Heart left ventricle (tissue), 16 donors: ENCODE measurements at regions of chr11 and their contacts with region 1.

Region 1: DNA sequence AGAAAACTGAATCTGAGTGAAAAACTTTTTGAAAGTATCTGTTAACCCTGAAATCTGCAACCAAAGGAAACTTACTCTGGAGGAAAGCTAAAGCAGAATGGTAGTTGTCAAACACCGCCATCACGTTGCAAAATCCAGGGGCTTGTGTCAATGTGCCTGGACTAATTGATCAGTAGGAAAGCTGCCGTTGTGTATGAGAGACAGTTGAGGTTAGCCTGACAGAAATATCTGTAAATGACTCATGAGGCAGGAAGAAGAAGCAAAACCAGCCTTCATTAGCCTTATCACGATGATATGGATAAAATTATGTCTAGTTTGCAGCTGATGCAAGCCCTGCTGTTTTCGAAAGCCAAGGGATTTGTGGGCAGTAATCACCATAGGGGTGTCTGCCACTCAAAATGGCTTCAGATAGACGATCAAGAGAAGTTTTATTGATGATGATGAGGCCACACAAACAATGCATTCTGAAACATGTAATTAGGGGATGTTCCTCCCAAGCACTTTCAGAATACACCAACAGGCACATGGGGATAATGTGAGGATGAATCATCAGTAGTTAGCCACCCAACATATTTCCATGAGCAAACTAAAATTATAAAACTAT is 8.9 kb downstream of the SCGB1A1 start:
- DNase-seq: no peak
- ATAC-seq: no peak
- H3K4me3 ChIP-seq: no peak overlapping the region
- H3K27ac ChIP-seq: peak overlapping the region in 2 of 12 donors; percentile 78 to 84
- H3K4me1 ChIP-seq: peaks cover 0 to 62% (median 3%) of the 10 kb centered on the region in 12 donors
- H3K27me3 ChIP-seq: no peaks in the 10 kb centered on the region
- CTCF ChIP-seq: no peak
- POLR2A ChIP-seq: no peak

Region 2: DNA sequence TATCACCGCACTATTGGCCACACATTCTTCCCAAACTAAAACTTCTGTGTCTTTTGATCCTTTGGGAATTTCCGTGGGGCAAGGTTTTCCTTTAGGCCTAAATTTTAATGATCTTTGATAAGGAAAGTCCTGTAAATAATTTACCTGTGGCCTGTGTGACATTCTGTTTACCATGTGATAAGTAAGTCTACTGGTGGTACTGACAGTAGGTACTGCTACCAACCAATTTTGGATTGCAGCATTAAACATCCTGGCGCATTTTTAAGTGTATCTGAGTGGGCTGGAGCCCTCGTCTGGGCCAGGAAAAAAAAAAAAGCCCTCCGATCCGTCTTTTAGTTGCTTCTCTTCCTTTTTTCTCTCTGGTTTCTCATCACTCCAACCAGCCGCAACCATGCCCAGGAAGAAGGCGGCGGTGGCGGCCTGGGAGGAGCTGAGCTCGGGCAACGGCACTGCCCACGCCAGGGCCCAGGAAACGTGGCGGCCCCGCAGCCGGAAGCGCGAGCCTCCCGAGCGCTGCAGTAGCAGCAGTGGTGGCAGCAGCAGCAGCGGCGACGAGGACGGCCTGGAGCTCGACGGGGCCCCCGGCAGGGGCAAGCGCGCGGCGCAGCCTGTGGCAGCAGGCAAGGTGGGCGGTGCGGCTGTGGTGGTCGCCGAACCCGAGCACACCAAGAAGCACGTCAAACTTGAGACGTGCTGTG is 56.8 kb before region 1 on chr11:
- intact Hi-C with region 1: no loop called
- DNase-seq: peak in 2 of 5 donors; percentile 45 to 57
- ATAC-seq: peak in 1 of 4 donors; percentile 22
- H3K4me3 ChIP-seq: peak overlapping the region in 1 of 12 donors; percentile 43
- H3K27ac ChIP-seq: peak overlapping the region in 1 of 12 donors; percentile 70
- H3K4me1 ChIP-seq: no peaks in the 10 kb centered on the region
- H3K27me3 ChIP-seq: no peaks in the 10 kb centered on the region
- CTCF ChIP-seq: no peak
- POLR2A ChIP-seq: no peak

Region 3: DNA sequence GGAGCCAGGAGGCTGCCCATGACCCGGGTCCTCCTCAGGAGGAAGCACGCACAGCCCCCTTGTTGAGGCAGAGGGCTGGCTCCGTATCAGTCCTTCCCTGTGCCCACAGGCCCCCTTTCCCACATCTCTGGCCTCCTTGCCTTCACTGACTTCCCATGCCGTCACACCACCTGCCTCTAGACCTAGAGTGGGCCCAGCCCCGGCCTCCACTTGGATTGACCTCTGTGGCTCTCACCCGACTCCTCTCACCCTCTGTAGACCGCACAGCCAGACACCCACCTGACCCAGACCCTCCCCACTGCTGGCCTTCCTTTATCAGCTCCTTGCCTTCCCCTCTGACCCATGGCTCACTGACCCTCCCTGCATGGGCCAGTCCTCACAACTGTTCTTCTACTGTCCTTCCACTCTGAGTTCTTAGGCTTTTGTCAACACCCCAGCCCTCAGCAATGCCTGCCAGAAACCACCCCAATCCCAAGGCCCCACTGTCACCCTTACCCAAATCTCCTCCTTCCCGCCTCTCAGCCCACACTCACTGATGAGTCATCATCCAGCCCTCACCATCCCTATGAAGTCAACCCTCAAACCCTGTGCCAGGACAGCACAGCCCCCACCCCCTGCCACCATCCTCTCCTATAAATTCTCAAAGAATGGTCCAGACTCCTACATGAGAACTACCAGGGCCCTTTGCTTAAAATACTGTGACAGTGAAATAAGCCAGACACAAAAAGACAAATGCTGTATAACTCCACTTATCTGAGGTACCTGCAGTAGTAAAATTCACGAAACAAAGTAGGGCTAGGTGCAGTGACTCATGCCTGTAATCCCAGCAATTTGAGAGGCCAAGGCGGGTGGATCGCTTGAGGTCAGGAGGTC is 44.5 kb after region 1 on chr11:
- intact Hi-C with region 1: no loop called
- DNase-seq: no peak
- ATAC-seq: peak; percentile 5 to 64 (median 31)
- H3K4me3 ChIP-seq: no peak overlapping the region
- H3K27ac ChIP-seq: peak overlapping the region in 1 of 12 donors; percentile 82
- H3K4me1 ChIP-seq: peaks cover 0 to 4% (median 0%) of the 10 kb centered on the region in 12 donors
- H3K27me3 ChIP-seq: no peaks in the 10 kb centered on the region
- CTCF ChIP-seq: no peak
- POLR2A ChIP-seq: no peak

Region 4: GRCh38 chr11:62497132-62497915 is 69.6 kb after region 1 on chr11:
- intact Hi-C with region 1: loop called in 1 of 10 experiments (anchors 5 kb)
- DNase-seq: peak in 1 of 5 donors; percentile 18
- ATAC-seq: peak in 2 of 4 donors; percentile 26 to 51
- H3K4me3 ChIP-seq: no peak overlapping the region
- H3K27ac ChIP-seq: peak overlapping the region in 1 of 12 donors; percentile 22
- H3K4me1 ChIP-seq: peaks cover 0 to 46% (median 29%) of the 10 kb centered on the region in 12 donors
- H3K27me3 ChIP-seq: no peaks in the 10 kb centered on the region
- CTCF ChIP-seq: peak in 11 of 12 donors; percentile 21 to 52 (median 37)
- POLR2A ChIP-seq: no peak